ENCODE measurements at regions of chr13 and their contacts with region 1.

Region 1: GRCh38 chr13:25095862-25096453 is at the start of gene PABPC3:
- DNase-seq: no peak
- ATAC-seq: no peak
- H3K4me3 ChIP-seq: no peak within 1 kb of the TSS
- H3K27ac ChIP-seq: no peak within 1 kb of the TSS
- H3K4me1 ChIP-seq: no peaks in the 10 kb centered on the region
- H3K27me3 ChIP-seq: no peaks in the 10 kb centered on the region
- CTCF ChIP-seq: no peak
- total RNA-seq, gene PABPC3: 0.18 TPM

Region 2: DNA sequence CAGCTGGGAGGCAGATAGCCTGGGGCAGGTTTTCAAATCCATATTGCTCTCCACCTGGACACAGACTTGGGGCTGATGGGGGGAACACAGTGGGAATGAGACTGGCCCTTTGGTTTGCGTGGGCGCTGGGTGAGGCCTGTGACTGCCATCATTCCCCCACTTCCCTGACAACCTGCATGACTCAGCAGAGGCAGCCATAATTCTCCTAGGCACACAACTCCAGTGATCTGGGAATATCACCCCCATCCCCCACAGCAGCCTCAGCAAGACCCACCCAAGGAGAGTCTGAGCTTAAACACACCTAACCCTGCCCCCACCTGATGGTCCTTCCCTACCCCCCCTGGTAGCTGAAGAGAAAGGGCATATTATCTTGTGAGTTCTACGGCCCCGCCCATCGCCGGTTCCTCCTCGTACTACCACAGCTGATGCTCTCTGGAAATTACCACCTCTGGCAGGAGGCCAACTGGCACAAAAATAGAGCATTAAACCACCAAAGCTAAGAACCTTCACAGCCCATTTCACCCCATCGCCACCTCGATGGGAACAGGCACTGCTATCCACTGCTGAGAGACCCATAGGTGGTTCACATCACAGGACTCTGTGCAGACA is 261.0 kb before region 1 on chr13:
- CTCF ChIA-PET with region 1: no interaction called
- POLR2A ChIA-PET with region 1: no interaction called
- in situ Hi-C with region 1: no loop called
- intact Hi-C with region 1: no loop called
- DNase-seq: no peak
- ATAC-seq: no peak
- H3K4me3 ChIP-seq: no peak overlapping the region
- H3K27ac ChIP-seq: no peak overlapping the region
- H3K4me1 ChIP-seq: no peaks in the 10 kb centered on the region
- H3K27me3 ChIP-seq: no peaks in the 10 kb centered on the region
- CTCF ChIP-seq: no peak

Region 3: GRCh38 chr13:25059958-25060357 is 36.0 kb before region 1 on chr13:
- CTCF ChIA-PET with region 1: interaction called, 10 read pairs
- POLR2A ChIA-PET with region 1: no interaction called
- in situ Hi-C with region 1: no loop called
- intact Hi-C with region 1: no loop called
- DNase-seq: no peak
- ATAC-seq: no peak
- H3K4me3 ChIP-seq: no peak overlapping the region
- H3K27ac ChIP-seq: no peak overlapping the region
- H3K4me1 ChIP-seq: no peaks in the 10 kb centered on the region
- H3K27me3 ChIP-seq: no peaks in the 10 kb centered on the region
- CTCF ChIP-seq: no peak

Region 4: DNA sequence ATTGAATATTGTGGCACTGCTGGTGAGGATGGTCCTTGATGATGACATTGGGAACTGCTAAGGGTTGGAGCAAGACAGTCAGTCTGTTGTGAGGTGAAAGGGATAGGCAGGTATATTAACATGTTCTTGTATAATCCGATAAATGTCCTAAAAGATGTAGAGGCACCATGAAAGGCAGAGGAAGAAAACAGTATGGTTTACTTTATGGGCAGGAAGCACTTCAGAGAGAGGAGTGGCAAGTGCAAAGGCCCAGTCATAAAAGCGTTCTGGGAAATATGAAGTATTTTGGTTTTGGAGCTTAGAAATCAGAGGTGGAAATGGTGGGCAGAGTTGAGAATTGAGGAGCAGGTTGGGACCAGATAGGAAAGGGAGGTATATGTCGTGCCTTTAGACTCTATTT is 214.9 kb after region 1 on chr13:
- CTCF ChIA-PET with region 1: no interaction called
- POLR2A ChIA-PET with region 1: no interaction called
- in situ Hi-C with region 1: no loop called
- intact Hi-C with region 1: no loop called
- DNase-seq: no peak
- ATAC-seq: no peak
- H3K4me3 ChIP-seq: no peak overlapping the region
- H3K27ac ChIP-seq: no peak overlapping the region
- H3K4me1 ChIP-seq: no peaks in the 10 kb centered on the region
- H3K27me3 ChIP-seq: no peaks in the 10 kb centered on the region
- CTCF ChIP-seq: no peak

Measured in Panc1 (cell line).